Mammary epithelial cell (primary cell): ENCODE measurements at regions of chr1 and their contacts with region 1.

Region 1: GRCh38 chr1:85581802-85582686 is 1.5 kb downstream of the CCN1 start:
- DNase-seq: peak; percentile 72
- H3K4me3 ChIP-seq: peak overlapping the region; percentile 86 to 95 (median 92)
- H3K27ac ChIP-seq: peak overlapping the region; percentile 86
- H3K4me1 ChIP-seq: peaks cover 40% of the 10 kb centered on the region
- H3K27me3 ChIP-seq: no peaks in the 10 kb centered on the region
- CTCF ChIP-seq: peak; percentile 59 to 63

Region 2: DNA sequence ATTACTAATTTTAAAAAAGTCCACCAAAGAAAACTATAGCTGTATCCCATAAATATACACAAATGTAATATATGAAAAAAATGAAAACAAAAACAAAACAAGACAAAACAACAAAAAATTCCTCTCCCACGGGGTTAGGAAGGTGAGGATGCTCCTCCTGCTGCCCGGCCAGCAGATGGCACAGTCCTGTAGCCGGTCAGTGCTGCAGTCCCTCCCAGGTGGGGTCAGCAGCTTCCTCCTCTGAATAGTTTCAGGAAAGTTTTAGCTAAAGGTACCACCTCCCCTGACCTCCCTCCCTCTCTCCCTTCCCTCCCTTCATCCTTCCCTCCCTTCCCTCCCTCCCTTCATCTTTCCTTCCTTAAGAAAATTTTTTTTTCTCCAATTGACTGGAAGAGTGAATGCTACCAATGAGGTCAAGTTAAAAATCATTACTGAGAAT is 237.8 kb before region 1 on chr1:
- CTCF ChIA-PET with region 1: interaction called, 4 read pairs
- dilution Hi-C with region 1: no loop called
- in situ Hi-C with region 1: no loop called
- intact Hi-C with region 1: loop called (anchors 1 kb)
- DNase-seq: peak; percentile 33
- H3K4me3 ChIP-seq: peak overlapping the region in 2 of 3 experiments; percentile 14 to 18
- H3K27ac ChIP-seq: peak overlapping the region; percentile 18
- H3K4me1 ChIP-seq: peaks cover 38% of the 10 kb centered on the region
- H3K27me3 ChIP-seq: no peaks in the 10 kb centered on the region
- CTCF ChIP-seq: peak; percentile 61 to 86

Region 3: GRCh38 chr1:85607126-85607912 is 25.3 kb after region 1 on chr1:
- CTCF ChIA-PET with region 1: interaction called, 3 read pairs
- dilution Hi-C with region 1: no loop called
- in situ Hi-C with region 1: no loop called
- intact Hi-C with region 1: loop called (anchors 1 kb)
- DNase-seq: peak; percentile 98
- H3K4me3 ChIP-seq: no peak overlapping the region
- H3K27ac ChIP-seq: peak overlapping the region; percentile 69
- H3K4me1 ChIP-seq: peaks cover 44% of the 10 kb centered on the region
- H3K27me3 ChIP-seq: no peaks in the 10 kb centered on the region
- CTCF ChIP-seq: no peak

Region 4: GRCh38 chr1:85628791-85629531 is 46.9 kb after region 1 on chr1:
- CTCF ChIA-PET with region 1: no interaction called
- dilution Hi-C with region 1: no loop called
- in situ Hi-C with region 1: no loop called
- intact Hi-C with region 1: loop called (anchors 1 kb)
- DNase-seq: peak; percentile 49
- H3K4me3 ChIP-seq: no peak overlapping the region
- H3K27ac ChIP-seq: no peak overlapping the region
- H3K4me1 ChIP-seq: peaks cover 13% of the 10 kb centered on the region
- H3K27me3 ChIP-seq: no peaks in the 10 kb centered on the region
- CTCF ChIP-seq: no peak

Region 5: DNA sequence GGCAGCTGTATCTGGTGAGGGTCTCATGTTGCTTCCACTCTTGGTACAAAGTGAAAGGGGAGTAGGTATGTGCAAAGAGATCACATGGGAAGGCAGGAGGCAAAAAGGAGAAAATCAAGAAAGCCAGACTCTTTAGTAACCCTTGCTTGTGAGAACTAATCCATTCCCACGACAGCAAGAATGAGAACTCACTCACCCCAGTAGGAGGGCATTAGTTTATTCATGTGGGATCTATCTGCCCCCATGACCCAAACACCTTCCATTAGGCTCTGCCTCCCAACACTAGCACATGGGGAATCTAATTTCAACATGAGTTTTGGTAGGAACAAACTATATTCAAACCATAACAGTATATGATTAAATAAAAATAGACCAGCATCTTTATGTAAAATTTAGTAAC is 68.6 kb after region 1 on chr1:
- CTCF ChIA-PET with region 1: no interaction called
- dilution Hi-C with region 1: no loop called
- in situ Hi-C with region 1: no loop called
- intact Hi-C with region 1: no loop called
- DNase-seq: no peak
- H3K4me3 ChIP-seq: no peak overlapping the region
- H3K27ac ChIP-seq: no peak overlapping the region
- H3K4me1 ChIP-seq: peaks cover 6% of the 10 kb centered on the region
- H3K27me3 ChIP-seq: no peaks in the 10 kb centered on the region
- CTCF ChIP-seq: no peak